RWPE1 (cell line): ENCODE measurements at regions of chr2 and their contacts with region 1.

Region 1: GRCh38 chr2:44361330-44362206 is at the starts of genes CAMKMT and PREPL:
- DNase-seq: peak; percentile 98
- H3K27ac ChIP-seq: peak within 1 kb of the TSS; percentile 87
- CTCF ChIP-seq: no peak

Region 2: GRCh38 chr2:44348400-44348799 is 13.2 kb before region 1 on chr2:
- CTCF ChIA-PET with region 1: interaction called, 5 read pairs
- POLR2A ChIA-PET with region 1: interaction called, 13 read pairs
- DNase-seq: no peak
- H3K27ac ChIP-seq: no peak overlapping the region
- CTCF ChIP-seq: no peak